ENCODE measurements at regions of chr1 and their contacts with region 1.

Region 1: GRCh38 chr1:228748431-228748830 is 13.2 kb downstream of the RHOU start:
- DNase-seq: no peak
- ATAC-seq: no peak
- H3K4me3 ChIP-seq: no peak overlapping the region
- H3K27ac ChIP-seq: no peak overlapping the region
- H3K4me1 ChIP-seq: no peaks in the 10 kb centered on the region
- H3K27me3 ChIP-seq: peaks cover 28% of the 10 kb centered on the region
- CTCF ChIP-seq: no peak
- POLR2A ChIP-seq: no peak
- RAD21 ChIP-seq: no peak

Region 2: GRCh38 chr1:228555074-228555989 is 193.1 kb before region 1 on chr1:
- CTCF ChIA-PET with region 1: no interaction called
- POLR2A ChIA-PET with region 1: no interaction called
- RAD21 ChIA-PET with region 1: no interaction called
- intact Hi-C with region 1: no loop called
- DNase-seq: no peak
- ATAC-seq: no peak
- H3K4me3 ChIP-seq: no peak overlapping the region
- H3K27ac ChIP-seq: no peak overlapping the region
- H3K4me1 ChIP-seq: peaks cover 0 to 14% of the 10 kb centered on the region in 2 experiments; a peak in 2 of 4 replicates
- H3K27me3 ChIP-seq: no peaks in the 10 kb centered on the region
- CTCF ChIP-seq: no peak
- POLR2A ChIP-seq: no peak
- RAD21 ChIP-seq: no peak

Region 3: GRCh38 chr1:228850141-228851100 is 102.0 kb after region 1 on chr1:
- CTCF ChIA-PET with region 1: no interaction called
- POLR2A ChIA-PET with region 1: no interaction called
- RAD21 ChIA-PET with region 1: no interaction called
- intact Hi-C with region 1: loop called (anchors 10 kb)
- DNase-seq: no peak
- ATAC-seq: no peak
- H3K4me3 ChIP-seq: no peak overlapping the region
- H3K27ac ChIP-seq: no peak overlapping the region
- H3K4me1 ChIP-seq: peaks cover 8 to 10% of the 10 kb centered on the region in 2 experiments; a peak in 3 of 4 replicates
- H3K27me3 ChIP-seq: no peaks in the 10 kb centered on the region
- CTCF ChIP-seq: no peak
- POLR2A ChIP-seq: no peak
- RAD21 ChIP-seq: no peak